ENCODE measurements at regions of chr7 and their contacts with region 1.

Region 1: DNA sequence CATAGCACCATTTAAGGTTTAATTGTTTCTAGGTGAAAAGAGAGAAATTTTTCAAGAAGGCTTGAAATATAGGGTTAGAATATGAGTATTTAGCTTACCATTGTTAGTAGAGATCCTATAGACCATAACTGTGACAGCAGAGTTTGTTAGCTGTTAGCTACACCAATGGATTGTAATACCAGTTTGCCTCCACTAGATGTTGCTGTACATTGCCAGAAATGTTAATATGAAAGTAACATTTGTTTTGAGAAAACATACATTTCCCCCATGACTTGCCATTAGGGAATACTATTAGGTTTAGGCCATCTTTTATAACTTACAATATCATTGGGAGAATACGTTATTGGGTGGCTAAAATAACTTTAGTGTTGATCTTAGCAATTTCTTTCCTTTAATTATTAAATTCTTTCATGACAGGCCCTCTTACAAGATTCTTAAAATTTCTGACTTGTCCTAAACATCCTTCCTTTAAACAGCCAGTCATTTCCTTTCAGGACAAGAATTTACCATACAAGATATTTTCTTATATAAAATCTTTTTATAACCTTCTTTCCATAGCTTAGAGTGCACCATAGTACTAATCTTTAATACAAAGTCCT is 39.5 kb downstream of the ZNF117 start:
- DNase-seq: peak in 3 of 14 experiments; percentile 56 to 66 (median 65)
- ATAC-seq: peak; percentile 60
- H3K4me3 ChIP-seq: no peak overlapping the region
- H3K4me3 Mint-ChIP-seq: no peak overlapping the region
- H3K27ac ChIP-seq: no peak overlapping the region
- H3K27ac Mint-ChIP-seq: no peak overlapping the region
- H3K4me1 ChIP-seq: peaks cover 13% of the 10 kb centered on the region
- H3K4me1 Mint-ChIP-seq: peaks cover 5% of the 10 kb centered on the region
- H3K27me3 ChIP-seq: peaks cover 20 to 36% of the 10 kb centered on the region in 2 experiments
- H3K27me3 Mint-ChIP-seq: peaks cover 45% of the 10 kb centered on the region
- CTCF ChIP-seq: peak; percentile 96

Region 2: DNA sequence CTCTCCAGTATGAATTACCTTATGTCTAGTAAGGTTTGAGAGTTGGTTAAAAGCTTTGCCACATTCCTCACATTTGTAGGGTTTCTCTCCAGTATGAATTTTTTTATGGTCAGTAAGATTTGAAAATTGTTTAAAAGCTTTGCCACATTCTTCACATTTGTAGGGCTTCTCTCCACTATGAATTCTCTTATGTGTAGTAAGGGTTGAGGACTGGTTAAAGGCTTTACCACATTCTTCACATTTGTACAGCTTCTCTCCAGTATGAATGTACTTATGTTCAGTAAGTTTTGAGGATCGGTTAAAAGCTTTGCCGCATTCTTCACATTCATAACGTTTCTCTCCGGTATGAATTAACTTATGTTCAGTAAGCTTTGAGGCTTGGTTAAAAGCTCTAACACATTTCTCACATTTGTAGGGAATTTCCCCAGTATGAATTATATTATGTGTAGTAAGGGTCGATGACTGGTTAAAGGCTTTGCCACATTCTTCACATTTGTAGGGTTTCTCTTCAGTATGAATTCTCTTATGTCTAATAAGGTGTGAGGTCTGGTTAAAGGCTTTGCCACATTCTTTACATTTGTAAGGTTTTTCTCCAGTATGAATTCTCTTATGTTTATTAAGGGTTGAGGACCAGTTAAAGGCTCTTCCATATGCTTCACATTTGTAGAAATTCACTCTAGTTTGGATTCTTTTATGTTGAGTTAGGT is 27.3 kb after region 1 on chr7:
- CTCF ChIA-PET with region 1: no interaction called
- POLR2A ChIA-PET with region 1: no interaction called
- intact Hi-C with region 1: no loop called
- DNase-seq: no peak
- ATAC-seq: no peak
- H3K4me3 ChIP-seq: no peak overlapping the region
- H3K4me3 Mint-ChIP-seq: no peak overlapping the region
- H3K27ac ChIP-seq: no peak overlapping the region
- H3K27ac Mint-ChIP-seq: no peak overlapping the region
- H3K4me1 ChIP-seq: no peaks in the 10 kb centered on the region
- H3K4me1 Mint-ChIP-seq: no peaks in the 10 kb centered on the region
- H3K27me3 ChIP-seq: no peaks in the 10 kb centered on the region
- H3K27me3 Mint-ChIP-seq: no peaks in the 10 kb centered on the region
- CTCF ChIP-seq: no peak

Region 3: GRCh38 chr7:65219623-65220022 is 268.3 kb after region 1 on chr7:
- CTCF ChIA-PET with region 1: interaction called, 6 read pairs
- POLR2A ChIA-PET with region 1: no interaction called
- intact Hi-C with region 1: loop called in 1 of 2 experiments (anchors 5 kb)
- DNase-seq: no peak
- ATAC-seq: no peak
- H3K4me3 ChIP-seq: no peak overlapping the region
- H3K4me3 Mint-ChIP-seq: no peak overlapping the region
- H3K27ac ChIP-seq: no peak overlapping the region
- H3K27ac Mint-ChIP-seq: no peak overlapping the region
- H3K4me1 ChIP-seq: peaks cover 4% of the 10 kb centered on the region
- H3K4me1 Mint-ChIP-seq: no peaks in the 10 kb centered on the region
- H3K27me3 ChIP-seq: no peaks in the 10 kb centered on the region
- H3K27me3 Mint-ChIP-seq: no peaks in the 10 kb centered on the region
- CTCF ChIP-seq: no peak